Heart right ventricle (tissue), 16 donors: ENCODE measurements at regions of chr11 and their contacts with region 1.

Region 1: GRCh38 chr11:27698872-27699474 is 1.3 kb downstream of the BDNF start:
- DNase-seq: peak; percentile 77 to 78
- ATAC-seq: peak; percentile 80 to 95 (median 92)
- H3K4me3 ChIP-seq: peak overlapping the region; percentile 40 to 68 (median 61)
- H3K27ac ChIP-seq: peak overlapping the region in 7 of 10 donors; percentile 18 to 87 (median 75)
- H3K4me1 ChIP-seq: peaks cover 0 to 32% (median 21%) of the 10 kb centered on the region in 9 donors
- H3K27me3 ChIP-seq: peaks cover 3 to 90% (median 53%) of the 10 kb centered on the region in 7 donors
- CTCF ChIP-seq: peak; percentile 57 to 84 (median 76)

Region 2: GRCh38 chr11:27524155-27524554 is 174.8 kb before region 1 on chr11:
- intact Hi-C with region 1: loop called in 2 of 10 experiments (anchors 5 to 10 kb)
- DNase-seq: no peak
- ATAC-seq: no peak
- H3K4me3 ChIP-seq: no peak overlapping the region
- H3K27ac ChIP-seq: no peak overlapping the region
- H3K4me1 ChIP-seq: peaks cover 0 to 13% (median 3%) of the 10 kb centered on the region in 9 donors
- H3K27me3 ChIP-seq: no peaks in the 10 kb centered on the region
- CTCF ChIP-seq: peak in 3 of 9 donors; percentile 13 to 18 (median 17)

Region 3: DNA sequence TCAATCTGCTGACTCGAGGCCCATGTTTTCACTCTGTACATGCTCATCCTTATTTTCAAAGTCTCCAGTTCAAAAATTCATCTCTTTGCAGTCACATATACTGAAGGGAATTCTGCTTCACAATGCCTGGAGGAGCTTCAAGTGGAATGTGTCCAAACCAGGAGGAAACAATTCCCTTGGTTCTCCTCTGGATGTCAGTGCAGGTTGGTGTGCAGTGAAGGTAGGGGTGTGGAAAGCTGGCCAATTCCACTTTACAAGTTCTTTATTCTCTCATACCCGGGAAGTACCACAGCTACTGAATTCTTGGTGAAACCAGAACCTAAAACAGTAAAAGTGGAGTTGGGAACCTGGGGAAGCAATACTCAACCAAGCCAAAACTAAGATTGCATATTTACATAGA is 56.0 kb before region 1 on chr11:
- intact Hi-C with region 1: loop called in 1 of 10 experiments (anchors 5 kb)
- DNase-seq: no peak
- ATAC-seq: peak in 1 of 8 donors; percentile 22
- H3K4me3 ChIP-seq: no peak overlapping the region
- H3K27ac ChIP-seq: no peak overlapping the region
- H3K4me1 ChIP-seq: peaks cover 0 to 18% (median 0%) of the 10 kb centered on the region in 9 donors
- H3K27me3 ChIP-seq: no peaks in the 10 kb centered on the region
- CTCF ChIP-seq: peak in 5 of 9 donors; percentile 11 to 22 (median 17)

Region 4: GRCh38 chr11:28107748-28108618 is 409.0 kb after region 1 on chr11 and contains the starts of genes KIF18A and METTL15:
- intact Hi-C with region 1: loop called in 2 of 10 experiments (anchors 5 to 10 kb)
- DNase-seq: peak; percentile 100
- ATAC-seq: peak; percentile 99 to 100 (median 100)
- H3K4me3 ChIP-seq: peak within 1 kb of the TSS; percentile 36 to 74 (median 59)
- H3K27ac ChIP-seq: peak within 1 kb of the TSS in 9 of 10 donors; percentile 63 to 91 (median 80)
- H3K4me1 ChIP-seq: peaks cover 0 to 45% (median 37%) of the 10 kb centered on the region in 9 donors
- H3K27me3 ChIP-seq: no peaks in the 10 kb centered on the region
- CTCF ChIP-seq: no peak
- total RNA-seq, gene KIF18A: 0.06 to 1.3 (median 0.17) TPM in 9 of 10 donors, not detected in the other
- total RNA-seq, gene METTL15: 8.9 to 13.6 (median 11.9) TPM

Region 5: DNA sequence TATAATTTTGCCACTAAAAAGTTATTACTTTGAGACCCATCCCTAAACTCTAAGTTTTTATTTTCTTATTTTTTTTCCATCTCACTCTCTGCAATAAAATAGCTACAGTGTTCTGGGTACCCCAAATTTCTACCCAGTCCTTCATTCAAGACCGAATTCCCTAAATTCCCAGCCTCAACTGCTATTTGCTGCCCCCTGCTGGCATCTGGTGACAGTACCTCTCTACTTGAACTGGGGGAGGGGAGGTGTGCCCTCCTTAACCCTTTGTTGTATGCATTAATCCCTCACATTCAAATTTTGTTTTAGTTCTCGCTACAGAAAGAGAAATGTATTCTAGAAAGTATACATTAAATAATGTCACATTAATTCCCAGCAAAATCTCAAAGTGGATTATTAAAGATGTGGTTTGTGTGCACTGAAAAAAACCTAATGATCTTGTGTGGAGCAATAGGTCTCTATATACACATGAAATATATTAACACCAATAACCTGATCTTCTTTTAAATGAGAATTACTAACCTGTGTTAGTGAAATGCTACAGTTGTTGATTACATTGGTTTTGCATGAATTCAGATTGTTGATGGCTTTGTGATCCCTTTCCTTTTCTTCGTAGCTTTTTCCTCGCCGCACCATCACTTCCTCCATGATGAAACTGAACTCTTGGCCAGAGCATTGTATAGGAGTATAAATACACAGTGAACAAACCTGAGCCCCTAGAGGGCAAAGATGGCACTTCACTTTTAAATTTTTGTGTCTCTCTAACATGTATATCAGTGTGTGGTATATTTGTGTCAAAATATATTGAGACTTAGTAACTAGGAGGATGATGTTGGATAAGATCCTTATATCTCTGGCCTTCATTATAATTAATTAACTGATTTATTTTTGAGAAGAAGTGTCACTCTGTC is 999.2 kb after region 1 on chr11:
- intact Hi-C with region 1: loop called in 9 of 10 experiments (anchors 1 to 10 kb)
- DNase-seq: peak; percentile 39 to 49
- ATAC-seq: peak in 5 of 8 donors; percentile 34 to 67 (median 58)
- H3K4me3 ChIP-seq: no peak overlapping the region
- H3K27ac ChIP-seq: no peak overlapping the region
- H3K4me1 ChIP-seq: no peaks in the 10 kb centered on the region
- H3K27me3 ChIP-seq: no peaks in the 10 kb centered on the region
- CTCF ChIP-seq: peak; percentile 54 to 84 (median 74)

Region 6: GRCh38 chr11:29333993-29334775 is 1635.2 kb after region 1 on chr11:
- intact Hi-C with region 1: loop called in 6 of 10 experiments (anchors 5 to 10 kb)
- DNase-seq: no peak
- ATAC-seq: peak in 2 of 8 donors; percentile 38 to 51
- H3K4me3 ChIP-seq: no peak overlapping the region
- H3K27ac ChIP-seq: no peak overlapping the region
- H3K4me1 ChIP-seq: no peaks in the 10 kb centered on the region
- H3K27me3 ChIP-seq: peaks cover 0 to 13% (median 0%) of the 10 kb centered on the region in 7 donors
- CTCF ChIP-seq: peak in 7 of 9 donors; percentile 27 to 56 (median 36)